AG04449 (cell line): ENCODE measurements at regions of chr15 and their contacts with region 1.

Region 1: DNA sequence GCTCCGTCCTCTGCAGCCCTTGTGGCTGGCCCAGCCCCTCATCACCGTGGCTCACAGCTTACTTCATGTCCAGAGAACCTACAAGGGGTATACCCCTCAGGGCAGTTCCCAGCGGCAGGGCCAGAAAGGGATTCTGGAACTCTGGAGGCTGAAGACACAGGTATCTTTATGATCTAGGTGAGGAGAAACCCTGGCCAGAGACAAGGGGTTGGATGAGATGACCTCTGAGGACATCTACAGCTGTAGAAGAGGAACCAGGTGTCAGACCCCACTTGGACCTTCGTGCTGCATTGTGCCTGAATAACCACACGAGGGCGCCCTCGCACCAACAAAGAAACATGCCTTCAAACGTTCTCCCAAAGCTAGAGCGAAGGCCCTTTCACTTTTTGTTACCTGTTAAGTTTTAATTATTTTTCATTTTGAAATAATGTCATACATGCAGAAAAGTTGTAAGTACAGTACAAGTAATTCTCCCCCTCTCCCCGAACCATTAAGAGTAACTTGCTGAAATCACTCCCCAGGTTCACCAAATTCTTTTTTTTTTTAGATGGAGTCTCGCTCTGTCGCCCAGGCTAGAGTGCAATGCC is 118.7 kb upstream of the SMAD3 start:
- DNase-seq: no peak
- H3K4me3 ChIP-seq: no peak overlapping the region
- CTCF ChIP-seq: peak; percentile 83

Region 2: DNA sequence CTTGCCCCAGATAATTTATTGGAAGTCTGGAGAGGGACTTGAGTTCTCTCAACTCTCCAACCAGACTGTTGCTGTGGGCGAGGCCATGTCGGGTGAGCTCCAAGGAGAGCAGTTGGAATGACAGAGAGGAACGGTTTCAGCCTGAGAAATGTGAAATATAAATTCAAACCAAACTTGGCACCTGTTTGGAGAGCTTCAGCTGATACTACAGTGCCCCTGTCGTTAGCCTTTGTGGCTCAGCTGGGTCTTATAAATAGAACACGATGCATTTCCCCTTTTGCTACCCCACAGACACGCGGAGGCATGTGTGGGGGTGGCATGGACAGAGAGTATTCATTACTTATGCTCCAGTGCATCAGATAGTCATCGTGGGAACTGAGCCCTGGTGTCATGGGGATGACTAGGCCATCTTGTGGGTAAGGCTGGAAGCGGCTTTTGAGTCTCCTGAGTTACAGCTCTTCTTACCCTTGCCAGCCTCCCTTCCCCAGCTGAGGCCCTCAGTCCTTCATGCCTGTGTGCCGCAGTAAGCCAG is 134.3 kb after region 1 on chr15:
- CTCF ChIA-PET with region 1: interaction called, 17 read pairs
- POLR2A ChIA-PET with region 1: no interaction called
- DNase-seq: no peak
- H3K4me3 ChIP-seq: no peak overlapping the region
- CTCF ChIP-seq: peak; percentile 38

Region 3: GRCh38 chr15:67085818-67086636 is 139.4 kb after region 1 on chr15:
- CTCF ChIA-PET with region 1: interaction called, 17 read pairs
- POLR2A ChIA-PET with region 1: no interaction called
- DNase-seq: peak; percentile 79
- H3K4me3 ChIP-seq: no peak overlapping the region
- CTCF ChIP-seq: no peak

Region 4: GRCh38 chr15:67101911-67102598 is 155.4 kb after region 1 on chr15:
- CTCF ChIA-PET with region 1: interaction called, 13 read pairs
- POLR2A ChIA-PET with region 1: no interaction called
- DNase-seq: peak; percentile 79
- H3K4me3 ChIP-seq: no peak overlapping the region
- CTCF ChIP-seq: no peak

Region 5: DNA sequence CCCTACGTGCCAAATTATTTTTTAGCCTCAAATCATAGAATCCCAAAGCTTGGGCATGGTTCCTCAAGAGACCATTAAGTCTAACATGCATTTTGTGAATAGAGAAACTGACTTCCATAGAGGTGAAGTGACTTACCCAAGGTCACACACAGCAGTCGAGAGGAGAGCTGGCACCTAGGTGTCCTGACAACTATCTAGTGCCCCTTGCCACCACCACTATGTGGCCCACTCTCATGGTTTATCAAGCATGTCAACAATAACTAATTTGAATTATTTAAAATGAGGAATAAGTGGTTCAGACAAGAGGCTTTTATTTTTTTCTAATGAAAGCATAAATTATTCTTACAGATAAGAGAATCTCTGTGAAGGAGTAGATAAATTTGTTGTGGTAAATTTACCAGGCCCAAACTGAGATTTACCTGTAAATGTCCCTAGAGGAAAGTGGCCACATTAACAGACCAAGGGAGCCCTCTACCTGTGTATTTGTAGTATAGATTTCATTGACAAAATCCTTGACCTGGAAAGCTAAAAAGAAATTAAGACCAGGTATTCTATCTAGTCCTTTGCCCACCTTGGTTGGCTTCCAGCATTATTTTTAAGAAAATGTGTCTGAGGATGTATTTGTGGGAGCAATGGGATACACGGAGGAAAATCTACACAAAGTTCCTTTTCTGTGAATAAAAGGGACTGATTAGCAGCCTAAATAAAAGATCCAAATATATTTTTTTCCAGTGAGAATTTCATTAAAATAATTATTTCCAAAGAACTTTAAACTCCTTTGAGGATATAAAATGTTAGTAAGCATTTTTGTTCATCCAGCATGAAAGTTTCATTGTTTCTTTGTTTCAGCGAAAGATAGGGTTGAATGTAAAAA is 357.1 kb after region 1 on chr15:
- CTCF ChIA-PET with region 1: interaction called, 91 read pairs
- POLR2A ChIA-PET with region 1: no interaction called
- DNase-seq: no peak
- H3K4me3 ChIP-seq: no peak overlapping the region
- CTCF ChIP-seq: no peak